ENCODE measurements at regions of chr10 and their contacts with region 1.

Region 1: GRCh38 chr10:120735773-120736371 is 115.3 kb upstream of the WDR11 start:
- DNase-seq: no peak
- ATAC-seq: peak; percentile 86
- H3K4me3 ChIP-seq: no peak overlapping the region
- H3K27ac ChIP-seq: no peak overlapping the region
- H3K4me1 ChIP-seq: no peaks in the 10 kb centered on the region
- H3K27me3 ChIP-seq: peaks cover 7% of the 10 kb centered on the region
- CTCF ChIP-seq: peak; percentile 84

Region 2: GRCh38 chr10:120423431-120424197 is 312.3 kb before region 1 on chr10:
- CTCF ChIA-PET with region 1: no interaction called
- POLR2A ChIA-PET with region 1: no interaction called
- in situ Hi-C with region 1: no loop called
- intact Hi-C with region 1: loop called (anchors 5 kb)
- DNase-seq: peak; percentile 53
- ATAC-seq: peak; percentile 89
- H3K4me3 ChIP-seq: no peak overlapping the region
- H3K27ac ChIP-seq: no peak overlapping the region
- H3K4me1 ChIP-seq: no peaks in the 10 kb centered on the region
- H3K27me3 ChIP-seq: peaks cover 7% of the 10 kb centered on the region
- CTCF ChIP-seq: peak; percentile 96